A549 (cell line): ENCODE measurements at regions of chr15 and their contacts with region 1.

Region 1: DNA sequence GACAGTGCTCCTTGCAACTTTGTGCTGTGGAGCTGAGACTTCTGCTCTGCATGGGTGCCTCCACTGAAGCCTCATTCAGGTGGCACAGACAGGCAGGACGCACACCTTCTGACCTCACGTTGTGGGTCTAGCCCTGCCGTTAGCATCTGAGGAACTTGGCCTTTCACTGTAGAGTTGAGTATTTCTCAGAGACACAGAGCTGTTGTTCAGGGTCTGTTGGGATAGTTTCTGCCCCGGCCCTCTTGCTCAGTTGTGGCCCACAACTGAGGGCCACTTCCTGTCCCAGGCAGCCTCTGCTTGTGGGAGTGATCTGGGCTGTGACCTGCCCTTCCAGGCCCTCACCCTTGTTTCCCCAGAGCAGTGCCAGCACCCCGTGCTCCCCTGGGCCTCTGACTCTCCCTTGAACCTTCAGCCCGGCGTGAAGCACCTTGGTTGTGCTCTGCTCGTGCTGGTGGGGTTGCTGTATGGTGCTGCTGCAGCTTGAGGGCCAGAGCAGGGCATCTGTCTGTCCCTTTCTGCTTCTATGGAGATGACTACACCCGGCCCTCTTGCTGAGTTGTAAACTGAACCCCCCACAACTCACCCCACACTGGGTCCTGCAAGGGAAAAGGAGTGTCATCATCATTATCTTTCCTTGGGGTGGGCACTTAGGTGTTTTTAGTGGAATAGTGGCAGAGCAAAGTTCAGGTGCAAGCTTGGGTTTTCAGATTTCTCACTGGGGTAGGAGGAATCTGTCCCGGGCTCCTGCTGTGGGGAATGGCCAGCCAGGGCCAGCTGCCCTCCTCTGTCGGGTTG is 11.7 kb downstream of the BAHD1 start:
- DNase-seq: no peak
- ATAC-seq: no peak
- H3K4me3 ChIP-seq: no peak overlapping the region
- H3K27ac ChIP-seq: no peak overlapping the region
- H3K4me1 ChIP-seq: peaks cover 44% of the 10 kb centered on the region
- CTCF ChIP-seq: no peak
- EP300 ChIP-seq: no peak
- POLR2A ChIP-seq: no peak
- RAD21 ChIP-seq: no peak

Region 2: DNA sequence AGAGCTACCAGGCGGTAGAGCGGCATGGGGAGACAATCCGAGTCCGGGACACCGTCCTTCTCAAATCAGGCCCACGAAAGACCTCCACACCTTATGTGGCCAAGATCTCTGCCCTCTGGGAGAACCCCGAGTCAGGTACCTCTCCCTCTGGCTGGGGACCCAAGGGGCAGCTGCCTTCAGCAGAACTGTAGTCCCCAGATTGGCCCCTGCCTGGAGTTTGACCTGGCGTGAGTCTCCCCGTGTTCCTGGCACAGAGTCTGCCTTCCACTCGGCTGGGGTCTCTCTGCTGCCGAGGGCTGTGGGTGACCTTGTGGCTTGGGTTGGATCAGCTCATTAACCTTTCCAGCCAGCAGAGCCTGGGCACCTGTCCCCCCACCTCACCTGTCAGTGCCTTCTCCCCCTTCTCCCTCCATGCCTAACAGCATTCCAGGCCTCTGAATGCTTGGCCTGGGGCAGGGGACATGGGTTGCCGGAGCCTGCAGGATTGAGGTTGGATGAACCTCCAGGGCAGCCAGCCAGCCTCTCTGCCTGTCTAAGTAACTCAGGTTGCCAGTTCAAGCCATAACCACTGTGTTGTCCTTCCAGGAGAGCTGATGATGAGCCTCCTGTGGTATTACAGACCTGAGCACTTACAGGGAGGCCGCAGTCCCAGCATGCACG is 11.5 kb after region 1 on chr15:
- CTCF ChIA-PET with region 1: interaction called, 11 read pairs
- POLR2A ChIA-PET with region 1: no interaction called
- DNase-seq: no peak
- ATAC-seq: no peak
- H3K4me3 ChIP-seq: no peak overlapping the region
- H3K27ac ChIP-seq: no peak overlapping the region
- H3K4me1 ChIP-seq: no peaks in the 10 kb centered on the region
- CTCF ChIP-seq: no peak
- EP300 ChIP-seq: no peak
- POLR2A ChIP-seq: no peak
- RAD21 ChIP-seq: no peak